ENCODE measurements at regions of chr11 and their contacts with region 1.

Region 1: DNA sequence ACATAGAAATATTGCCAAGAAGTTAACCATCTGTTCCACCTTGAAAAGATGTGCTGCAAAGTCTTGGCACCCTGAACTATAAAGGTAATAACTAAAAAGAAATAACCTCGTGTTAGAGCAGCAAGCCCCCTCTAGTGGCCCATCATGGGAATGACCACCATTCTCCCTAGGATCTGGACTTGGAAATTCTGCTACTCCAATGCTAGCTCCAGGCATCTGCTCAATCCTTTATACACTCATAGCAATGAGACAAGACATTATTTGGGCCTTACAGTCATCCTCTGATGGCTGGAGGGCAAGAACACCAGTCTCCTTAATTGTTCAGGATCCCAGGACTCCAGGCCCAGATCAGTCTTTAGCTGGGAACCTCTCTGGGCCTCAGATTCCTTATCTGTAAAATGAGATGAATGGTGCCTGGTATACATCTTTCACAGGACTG is 76.0 kb downstream of the CWC15 start:
- DNase-seq: peak; percentile 47
- ATAC-seq: peak; percentile 91
- H3K4me3 ChIP-seq: no peak overlapping the region
- H3K27ac ChIP-seq: no peak overlapping the region
- H3K4me1 ChIP-seq: no peaks in the 10 kb centered on the region
- H3K27me3 ChIP-seq: no peaks in the 10 kb centered on the region
- CTCF ChIP-seq: peak; percentile 90 to 91 (median 90)
- POLR2A ChIP-seq: no peak
- RAD21 ChIP-seq: peak; percentile 90

Region 2: GRCh38 chr11:94519478-94520084 is 377.8 kb before region 1 on chr11:
- CTCF ChIA-PET with region 1: no interaction called
- POLR2A ChIA-PET with region 1: no interaction called
- RAD21 ChIA-PET with region 1: no interaction called
- intact Hi-C with region 1: loop called (anchors 2 kb)
- DNase-seq: peak; percentile 19
- ATAC-seq: peak; percentile 75
- H3K4me3 ChIP-seq: no peak overlapping the region
- H3K27ac ChIP-seq: no peak overlapping the region
- H3K4me1 ChIP-seq: no peaks in the 10 kb centered on the region
- H3K27me3 ChIP-seq: no peaks in the 10 kb centered on the region
- CTCF ChIP-seq: peak; percentile 53 to 73 (median 61); a peak in 5 of 6 replicates
- POLR2A ChIP-seq: no peak
- RAD21 ChIP-seq: peak; percentile 66

Region 3: DNA sequence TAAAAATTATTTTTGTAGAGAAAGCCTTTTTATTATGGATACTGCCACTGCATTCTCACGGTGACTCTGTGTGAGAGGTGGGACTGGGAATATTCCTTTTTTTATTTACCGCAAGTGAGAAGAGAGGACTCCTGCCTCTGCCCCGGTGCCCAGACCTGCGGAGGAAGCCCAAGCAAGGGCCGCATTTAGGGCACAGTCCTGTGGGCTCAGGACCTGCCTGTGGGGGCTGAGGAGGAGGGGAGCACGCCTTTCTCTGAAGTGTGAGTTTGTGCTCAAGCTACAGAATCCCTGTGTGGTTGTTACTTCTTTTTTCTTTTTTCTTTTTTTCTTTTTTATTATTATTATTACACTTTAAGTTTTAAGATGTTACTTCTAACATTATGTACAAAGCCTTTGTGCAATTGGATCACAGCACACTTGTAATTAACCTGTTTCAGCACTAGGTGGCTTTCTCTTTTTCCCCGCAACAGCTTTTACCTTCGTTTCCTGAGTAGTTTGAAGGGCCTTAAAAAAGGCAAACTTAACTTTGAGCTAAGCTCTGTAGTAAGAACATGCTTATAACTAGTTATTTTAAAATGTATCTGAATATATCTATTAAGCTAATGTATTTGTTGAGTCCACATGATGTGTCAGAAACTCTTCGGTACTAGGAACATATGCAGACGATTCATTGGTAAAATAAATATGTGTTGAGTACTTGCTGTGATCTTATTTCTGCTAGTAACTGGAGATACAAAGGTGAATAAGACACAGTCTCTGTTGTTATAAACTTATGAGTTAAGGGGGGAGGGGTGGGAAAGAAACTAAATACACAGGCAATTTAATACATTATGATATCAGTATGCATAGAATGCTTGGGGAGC is 110.9 kb before region 1 on chr11:
- CTCF ChIA-PET with region 1: no interaction called
- POLR2A ChIA-PET with region 1: no interaction called
- RAD21 ChIA-PET with region 1: no interaction called
- intact Hi-C with region 1: loop called (anchors 1 kb)
- DNase-seq: no peak
- ATAC-seq: no peak
- H3K4me3 ChIP-seq: no peak overlapping the region
- H3K27ac ChIP-seq: no peak overlapping the region
- H3K4me1 ChIP-seq: peaks cover 29 to 48% of the 10 kb centered on the region in 2 experiments
- H3K27me3 ChIP-seq: no peaks in the 10 kb centered on the region
- CTCF ChIP-seq: peak; percentile 53 to 63 (median 55); a peak in 5 of 6 replicates
- POLR2A ChIP-seq: no peak
- RAD21 ChIP-seq: peak; percentile 54